AG04449 (cell line): ENCODE measurements at regions of chr3 and their contacts with region 1.

Region 1: GRCh38 chr3:73451306-73451944 is 173.3 kb downstream of the PDZRN3 start:
- DNase-seq: no peak
- H3K4me3 ChIP-seq: no peak overlapping the region
- CTCF ChIP-seq: no peak

Region 2: DNA sequence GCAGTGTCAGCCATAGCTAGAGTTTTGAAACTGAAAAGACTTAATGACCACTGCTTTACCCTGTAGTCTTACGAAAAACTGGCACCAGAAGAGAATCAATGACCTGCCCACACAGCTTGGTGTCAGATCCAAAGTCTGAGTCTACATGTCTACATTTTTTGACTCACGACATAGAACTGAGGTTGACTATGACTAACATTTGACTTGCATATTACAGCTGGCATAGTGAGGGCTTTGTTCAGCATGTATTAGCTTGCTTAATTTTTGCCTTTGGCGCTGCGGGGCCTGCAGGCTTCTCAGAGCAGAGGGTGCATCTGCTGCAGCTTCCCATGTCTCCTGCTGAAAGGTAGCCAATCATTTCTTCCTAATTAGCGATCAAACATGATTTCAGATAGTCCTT is 223.0 kb before region 1 on chr3:
- CTCF ChIA-PET with region 1: no interaction called
- POLR2A ChIA-PET with region 1: no interaction called
- DNase-seq: no peak
- H3K4me3 ChIP-seq: no peak overlapping the region
- CTCF ChIP-seq: no peak

Region 3: GRCh38 chr3:73365756-73366397 is 85.5 kb before region 1 on chr3:
- CTCF ChIA-PET with region 1: no interaction called
- POLR2A ChIA-PET with region 1: no interaction called
- DNase-seq: no peak
- H3K4me3 ChIP-seq: no peak overlapping the region
- CTCF ChIP-seq: no peak

Region 4: GRCh38 chr3:73432023-73432705 is 19.3 kb before region 1 on chr3:
- CTCF ChIA-PET with region 1: interaction called, 20 read pairs
- POLR2A ChIA-PET with region 1: no interaction called
- DNase-seq: no peak
- H3K4me3 ChIP-seq: no peak overlapping the region
- CTCF ChIP-seq: peak; percentile 55

Region 5: DNA sequence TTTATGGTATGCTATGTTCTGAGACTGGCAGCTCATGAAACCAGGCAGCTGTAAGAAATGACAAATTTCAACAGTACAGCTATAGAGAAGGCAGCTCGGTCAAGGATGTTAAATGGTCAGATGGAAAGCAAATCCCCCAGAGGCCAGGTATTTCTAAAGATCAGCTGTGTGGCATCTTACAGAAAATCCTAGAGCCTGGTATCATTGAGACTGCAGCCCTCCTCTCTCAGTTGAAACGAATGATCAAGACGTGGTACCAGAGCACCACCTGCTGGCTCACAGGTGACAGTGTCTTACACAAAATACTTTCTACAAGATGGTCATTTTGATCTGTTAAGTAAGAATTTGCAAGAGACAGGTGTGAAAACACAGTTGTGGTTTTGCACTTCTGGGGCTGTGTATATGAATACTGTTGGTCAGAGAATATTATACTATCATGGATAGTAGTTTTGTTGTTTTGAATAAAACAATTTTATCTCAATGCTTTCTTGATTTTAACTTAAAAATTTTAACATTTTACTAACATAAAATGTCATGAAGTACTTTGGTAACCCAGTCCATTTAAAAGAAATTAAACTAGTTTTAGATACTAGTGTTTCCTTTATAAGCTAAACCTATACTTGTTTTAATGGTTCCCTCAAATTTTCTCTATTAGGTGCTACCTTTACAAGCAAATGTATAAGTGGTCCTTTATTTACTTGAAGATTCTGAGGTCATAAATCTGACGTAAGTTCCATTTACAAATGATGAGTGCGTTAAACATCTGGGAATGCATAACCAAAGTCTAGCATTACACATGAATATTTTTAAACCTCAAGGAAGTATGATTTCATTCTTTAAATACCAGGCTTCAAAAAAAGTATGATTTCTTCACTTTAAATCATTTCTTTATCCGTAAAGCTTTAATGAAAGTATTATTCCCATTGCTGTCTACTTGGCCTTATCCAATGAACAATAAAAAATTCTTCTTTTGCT is 51.5 kb after region 1 on chr3:
- CTCF ChIA-PET with region 1: interaction called, 33 read pairs
- POLR2A ChIA-PET with region 1: no interaction called
- DNase-seq: peak; percentile 77
- H3K4me3 ChIP-seq: no peak overlapping the region; the same call in 1 of the 2 replicates
- CTCF ChIP-seq: peak; percentile 70